PC-9 (cell line): ENCODE measurements at regions of chr22 and their contacts with region 1.

Region 1: GRCh38 chr22:42780070-42780540 is 59.4 kb upstream of the A4GALT start:
- DNase-seq: peak; percentile 51 to 79
- H3K4me3 ChIP-seq: no peak overlapping the region
- H3K27ac ChIP-seq: no peak overlapping the region
- H3K4me1 ChIP-seq: no peaks in the 10 kb centered on the region; the same call in 1 of the 2 replicates
- H3K27me3 ChIP-seq: no peaks in the 10 kb centered on the region
- CTCF ChIP-seq: peak; percentile 95

Region 2: DNA sequence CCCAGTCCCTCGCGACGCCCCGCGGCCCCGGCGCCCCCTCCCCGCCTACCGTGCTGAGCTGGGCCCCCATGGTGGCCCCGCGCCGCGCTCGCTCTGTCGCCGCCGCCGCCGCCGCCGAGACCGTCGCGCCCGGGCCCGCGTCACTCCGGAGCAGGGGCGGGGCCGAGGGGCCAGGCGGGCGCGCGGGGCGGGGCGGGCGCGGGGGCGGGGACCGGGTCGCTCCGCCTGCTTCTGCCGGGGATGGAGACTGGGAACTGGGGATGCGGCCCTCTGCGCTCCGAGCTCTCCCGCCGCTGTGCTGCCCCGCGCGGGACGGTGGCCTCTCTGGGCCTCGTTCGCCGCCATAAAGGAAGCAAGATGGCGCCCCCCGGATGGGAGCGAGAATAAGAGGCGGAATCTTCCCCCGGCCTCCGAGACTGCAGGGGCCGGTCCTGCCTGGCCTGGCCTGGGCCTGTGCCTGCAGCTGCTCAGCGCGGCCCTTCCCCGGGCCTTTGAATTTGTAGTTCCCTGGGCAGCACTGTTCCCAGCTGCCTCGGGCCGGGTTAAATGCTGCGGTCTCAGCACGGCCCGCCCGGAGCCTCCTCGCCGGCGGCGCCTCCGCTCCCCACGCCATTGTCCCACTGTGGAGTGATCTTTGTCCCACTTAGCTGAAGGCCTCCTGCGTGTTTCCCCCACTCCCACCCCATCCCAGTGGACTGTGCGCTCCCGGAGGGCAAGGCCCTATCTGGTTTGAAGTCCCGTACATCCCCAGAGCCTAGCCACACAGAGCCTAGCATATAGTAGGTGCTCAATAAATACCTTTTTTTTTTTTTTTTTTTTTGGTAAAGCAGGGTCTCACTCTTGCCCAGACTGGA is 130.6 kb before region 1 on chr22 and contains the start of gene CYB5R3:
- CTCF ChIA-PET with region 1: no interaction called
- POLR2A ChIA-PET with region 1: interaction called, 21 read pairs
- intact Hi-C with region 1: no loop called
- DNase-seq: peak; percentile 40 to 70
- H3K4me3 ChIP-seq: peak within 1 kb of the TSS; percentile 100
- H3K27ac ChIP-seq: no peak within 1 kb of the TSS
- H3K4me1 ChIP-seq: peaks cover 31% of the 10 kb centered on the region
- H3K27me3 ChIP-seq: no peaks in the 10 kb centered on the region
- CTCF ChIP-seq: no peak
- total RNA-seq, gene CYB5R3: 97.6 and 106 TPM in 2 replicates

Region 3: DNA sequence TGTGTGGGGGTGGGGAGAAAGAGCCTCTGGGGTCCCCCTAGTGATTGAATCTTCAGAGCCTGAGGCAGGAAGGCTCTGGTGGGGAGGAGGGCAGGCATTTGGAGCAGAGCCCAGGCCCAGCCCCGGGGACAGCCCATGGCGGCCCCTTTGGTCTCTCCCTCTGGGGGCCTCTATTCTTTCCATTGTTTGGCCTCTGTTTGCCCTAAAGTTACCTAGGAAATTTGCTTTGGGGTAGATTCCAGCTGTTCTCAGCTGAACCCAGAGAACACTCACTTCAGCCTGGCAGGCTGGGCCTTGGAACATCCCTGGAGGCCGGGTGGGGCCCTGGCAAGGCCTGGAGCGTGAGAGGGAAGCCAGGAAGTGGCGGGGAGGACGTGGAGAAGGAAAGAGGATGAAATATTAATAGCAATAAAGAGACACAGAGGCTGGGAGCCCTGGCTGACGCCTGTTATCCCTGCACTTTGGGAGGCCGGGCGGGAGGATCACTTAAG is 36.6 kb before region 1 on chr22:
- CTCF ChIA-PET with region 1: interaction called, 14 read pairs
- POLR2A ChIA-PET with region 1: no interaction called
- intact Hi-C with region 1: no loop called
- DNase-seq: peak in 1 of 2 experiments; percentile 77
- H3K4me3 ChIP-seq: no peak overlapping the region
- H3K27ac ChIP-seq: no peak overlapping the region
- H3K4me1 ChIP-seq: peaks cover 54% of the 10 kb centered on the region
- H3K27me3 ChIP-seq: no peaks in the 10 kb centered on the region
- CTCF ChIP-seq: no peak

Region 4: DNA sequence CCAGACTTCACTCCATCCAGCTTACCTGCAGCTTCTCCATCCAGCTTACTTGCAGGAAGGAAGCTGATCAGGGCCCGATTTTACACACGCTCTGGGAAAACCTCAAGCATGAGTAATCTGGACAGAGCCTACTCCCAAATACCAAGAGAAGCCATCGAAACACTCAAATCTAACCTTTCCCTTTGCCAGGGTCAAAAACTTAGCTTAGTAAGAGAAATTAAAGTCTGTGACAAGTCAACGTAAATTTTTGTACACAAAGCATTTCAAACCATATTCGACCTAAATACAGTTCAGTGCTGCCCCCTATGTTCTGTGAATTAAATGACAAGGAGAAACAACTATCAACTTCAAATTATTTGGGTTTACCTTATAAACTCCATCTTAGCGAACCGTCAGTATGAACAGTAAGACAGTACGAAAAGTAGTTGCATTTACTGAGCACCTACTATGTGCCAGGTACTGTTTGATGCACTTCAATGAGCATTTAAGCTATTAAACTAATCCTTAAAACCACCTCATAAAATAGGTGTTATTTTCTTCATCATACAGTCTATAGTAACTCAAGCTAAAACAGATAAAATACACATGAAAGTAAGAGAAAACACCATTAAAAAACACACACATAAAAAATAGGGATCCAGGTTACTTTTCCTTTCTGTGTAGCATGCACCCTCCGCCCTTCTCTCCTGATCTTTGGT is 40.1 kb after region 1 on chr22:
- CTCF ChIA-PET with region 1: no interaction called
- POLR2A ChIA-PET with region 1: no interaction called
- intact Hi-C with region 1: loop called (anchors 5 kb)
- DNase-seq: peak; percentile 23 to 40
- H3K4me3 ChIP-seq: no peak overlapping the region
- H3K27ac ChIP-seq: no peak overlapping the region
- H3K4me1 ChIP-seq: no peaks in the 10 kb centered on the region; the same call in 1 of the 2 replicates
- H3K27me3 ChIP-seq: no peaks in the 10 kb centered on the region
- CTCF ChIP-seq: peak; percentile 85

Region 5: GRCh38 chr22:43230971-43231723 is 451.0 kb after region 1 on chr22:
- CTCF ChIA-PET with region 1: no interaction called
- POLR2A ChIA-PET with region 1: no interaction called
- intact Hi-C with region 1: loop called (anchors 10 kb)
- DNase-seq: peak in 1 of 2 experiments; percentile 77
- H3K4me3 ChIP-seq: no peak overlapping the region
- H3K27ac ChIP-seq: no peak overlapping the region
- H3K4me1 ChIP-seq: no peaks in the 10 kb centered on the region
- H3K27me3 ChIP-seq: peaks cover 46% of the 10 kb centered on the region
- CTCF ChIP-seq: peak; percentile 99